ENCODE measurements at regions of chr15 and their contacts with region 1.

Region 1: GRCh38 chr15:41930221-41930866 is 36.5 kb upstream of the SPTBN5 start:
- DNase-seq: peak; percentile 91 to 96 (median 93)
- H3K4me3 ChIP-seq: peak overlapping the region in 1 of 3 experiments; percentile 38
- H3K4me3 Mint-ChIP-seq: peak overlapping the region; percentile 39 to 64
- H3K27ac ChIP-seq: peak overlapping the region; percentile 58 to 79
- H3K27ac Mint-ChIP-seq: peak overlapping the region; percentile 87 to 96 (median 94)
- H3K4me1 ChIP-seq: peaks cover 72 to 88% of the 10 kb centered on the region in 2 donors
- H3K4me1 Mint-ChIP-seq: peaks cover 80% of the 10 kb centered on the region
- H3K27me3 ChIP-seq: no peaks in the 10 kb centered on the region
- H3K27me3 Mint-ChIP-seq: no peaks in the 10 kb centered on the region
- CTCF ChIP-seq: peak; percentile 51

Region 2: DNA sequence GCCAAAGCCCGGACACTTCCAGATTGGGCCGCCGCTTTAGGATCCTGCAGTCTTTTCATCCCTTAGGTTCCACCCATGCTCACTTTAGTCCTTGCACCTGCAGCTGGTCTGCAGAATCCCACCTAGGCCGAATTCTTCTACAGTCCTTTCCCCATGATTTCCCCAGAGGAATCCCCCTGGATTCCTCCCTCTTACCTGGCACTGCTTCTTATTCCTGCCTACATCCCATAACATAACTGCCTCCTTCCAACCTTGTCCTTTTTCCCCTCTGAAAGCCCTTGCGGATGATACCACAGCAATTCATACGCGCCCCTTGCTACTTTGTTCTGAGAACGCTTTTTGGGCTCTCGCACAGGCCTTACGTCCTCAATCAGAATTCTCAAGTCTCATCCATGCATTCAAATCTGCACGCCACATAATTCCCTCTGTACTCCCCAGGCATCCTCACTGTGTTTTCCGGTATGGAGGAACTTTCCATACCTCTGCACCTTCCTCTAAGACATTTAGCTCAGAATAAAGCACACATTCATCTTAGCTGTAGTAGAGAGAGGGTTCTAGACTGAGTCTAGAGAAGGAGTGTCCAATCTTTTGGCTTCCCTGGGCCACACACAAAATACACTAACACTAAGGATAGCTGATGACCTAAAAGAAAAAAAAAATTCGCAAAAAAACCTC is 1995.8 kb before region 1 on chr15:
- intact Hi-C with region 1: loop called in 1 of 2 experiments (anchors 10 kb)
- DNase-seq: no peak
- H3K4me3 ChIP-seq: peak overlapping the region; percentile 76 to 94 (median 77)
- H3K4me3 Mint-ChIP-seq: peak overlapping the region; percentile 89 to 94
- H3K27ac ChIP-seq: peak overlapping the region; percentile 40 to 88
- H3K27ac Mint-ChIP-seq: peak overlapping the region; percentile 68 to 91 (median 83)
- H3K4me1 ChIP-seq: peaks cover 26 to 27% of the 10 kb centered on the region in 2 donors
- H3K4me1 Mint-ChIP-seq: peaks cover 44% of the 10 kb centered on the region
- H3K27me3 ChIP-seq: no peaks in the 10 kb centered on the region
- H3K27me3 Mint-ChIP-seq: peaks cover 0 to 2% (median 0%) of the 10 kb centered on the region in 3 donors
- CTCF ChIP-seq: no peak

Region 3: GRCh38 chr15:41914411-41914810 is 15.9 kb before region 1 on chr15:
- intact Hi-C with region 1: loop called in 1 of 2 experiments (anchors 2 kb)
- DNase-seq: no peak
- H3K4me3 ChIP-seq: no peak overlapping the region
- H3K4me3 Mint-ChIP-seq: no peak overlapping the region
- H3K27ac ChIP-seq: peak overlapping the region; percentile 85 to 87
- H3K27ac Mint-ChIP-seq: peak overlapping the region; percentile 95 to 98 (median 97)
- H3K4me1 ChIP-seq: peaks cover 63 to 65% of the 10 kb centered on the region in 2 donors
- H3K4me1 Mint-ChIP-seq: peaks cover 65% of the 10 kb centered on the region
- H3K27me3 ChIP-seq: no peaks in the 10 kb centered on the region
- H3K27me3 Mint-ChIP-seq: no peaks in the 10 kb centered on the region
- CTCF ChIP-seq: no peak

Region 4: GRCh38 chr15:42020713-42021273 is 90.4 kb after region 1 on chr15 and contains the start of gene PLA2G4E:
- intact Hi-C with region 1: no loop called
- DNase-seq: no peak
- H3K4me3 ChIP-seq: no peak within 1 kb of the TSS
- H3K4me3 Mint-ChIP-seq: no peak within 1 kb of the TSS
- H3K27ac ChIP-seq: no peak within 1 kb of the TSS
- H3K27ac Mint-ChIP-seq: peak within 1 kb of the TSS in 2 of 7 donors; percentile 21 to 35
- H3K4me1 ChIP-seq: no peaks in the 10 kb centered on the region
- H3K4me1 Mint-ChIP-seq: no peaks in the 10 kb centered on the region
- H3K27me3 ChIP-seq: no peaks in the 10 kb centered on the region
- H3K27me3 Mint-ChIP-seq: peaks cover 0 to 7% (median 2%) of the 10 kb centered on the region in 3 donors
- CTCF ChIP-seq: no peak
- polyA plus RNA-seq, gene PLA2G4E: not detected

Measured in CD14-positive monocyte (primary cell).